ENCODE measurements at regions of chr20 and their contacts with region 1.

Region 1: DNA sequence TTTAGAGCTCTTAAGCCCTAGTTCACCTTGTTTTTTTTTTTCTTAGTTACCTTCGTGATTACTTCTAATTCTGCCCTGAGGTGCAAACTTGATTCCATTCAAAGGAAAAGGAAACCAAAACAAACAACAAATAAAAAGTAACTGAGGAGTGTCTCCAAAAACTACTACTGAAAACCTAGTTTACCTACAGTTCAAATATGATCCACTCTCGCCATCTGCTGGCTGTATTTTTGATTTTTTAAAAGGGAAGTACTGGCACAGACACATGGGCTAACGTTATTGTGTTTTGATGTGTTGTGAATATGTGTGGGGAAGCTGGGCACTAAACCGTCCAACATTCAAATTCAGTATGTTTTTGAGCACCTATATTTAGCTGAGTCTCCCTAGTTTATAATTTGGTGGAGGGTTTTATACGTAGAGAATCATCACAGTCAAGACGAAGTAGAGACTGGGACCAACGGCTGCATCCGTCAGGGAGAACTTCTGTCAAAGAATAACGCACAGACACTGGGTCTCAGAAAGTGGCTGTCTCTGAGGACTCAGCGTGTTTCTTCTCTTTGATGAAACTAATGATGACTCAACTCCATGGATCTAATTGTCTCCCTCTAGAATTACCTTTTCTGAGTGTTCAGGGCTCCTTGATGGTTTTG is 373.5 kb upstream of the BTBD3 start:
- DNase-seq: no peak
- H3K4me3 ChIP-seq: no peak overlapping the region
- H3K27ac ChIP-seq: no peak overlapping the region
- H3K4me1 ChIP-seq: no peaks in the 10 kb centered on the region
- H3K27me3 ChIP-seq: no peaks in the 10 kb centered on the region
- CTCF ChIP-seq: peak; percentile 72

Region 2: DNA sequence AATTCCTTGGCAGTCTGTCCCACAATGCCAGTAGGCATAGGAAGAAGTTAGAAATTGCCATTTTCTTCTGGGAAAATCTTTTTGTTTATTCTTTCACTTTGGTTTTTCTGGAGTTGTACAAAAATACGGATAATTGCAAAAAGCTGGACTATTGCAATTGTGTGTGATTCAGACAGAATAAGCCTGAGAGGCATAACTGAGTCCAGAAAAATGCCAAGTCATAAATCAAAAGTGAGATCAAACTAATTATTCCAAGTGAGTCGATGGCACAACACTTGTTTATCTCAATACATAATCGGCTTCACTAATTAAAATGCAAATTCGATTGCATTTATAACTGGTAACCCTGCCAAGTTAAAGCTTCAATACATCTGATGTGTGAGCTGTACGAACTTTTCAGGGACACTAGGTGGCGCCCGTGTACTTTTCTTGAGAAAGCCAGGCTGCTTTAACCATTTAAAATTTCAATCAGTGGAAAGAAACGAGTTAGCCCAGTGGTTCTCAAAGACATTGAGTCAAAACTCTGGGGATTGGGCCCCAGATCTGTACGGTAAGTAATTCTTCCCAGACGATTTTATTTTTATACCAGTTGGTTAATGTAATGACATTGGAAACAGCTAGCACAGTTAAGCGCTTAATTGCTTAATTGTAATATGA is 1927.2 kb before region 1 on chr20:
- intact Hi-C with region 1: loop called (anchors 10 kb)
- DNase-seq: peak; percentile 36
- H3K4me3 ChIP-seq: no peak overlapping the region
- H3K27ac ChIP-seq: no peak overlapping the region
- H3K4me1 ChIP-seq: no peaks in the 10 kb centered on the region
- H3K27me3 ChIP-seq: peaks cover 57% of the 10 kb centered on the region
- CTCF ChIP-seq: peak; percentile 85

Region 3: GRCh38 chr20:9978397-9979004 is 1565.7 kb before region 1 on chr20:
- intact Hi-C with region 1: loop called (anchors 10 kb)
- DNase-seq: no peak
- H3K4me3 ChIP-seq: no peak overlapping the region
- H3K27ac ChIP-seq: no peak overlapping the region
- H3K4me1 ChIP-seq: no peaks in the 10 kb centered on the region
- H3K27me3 ChIP-seq: peaks cover 12% of the 10 kb centered on the region
- CTCF ChIP-seq: peak; percentile 79

Region 4: DNA sequence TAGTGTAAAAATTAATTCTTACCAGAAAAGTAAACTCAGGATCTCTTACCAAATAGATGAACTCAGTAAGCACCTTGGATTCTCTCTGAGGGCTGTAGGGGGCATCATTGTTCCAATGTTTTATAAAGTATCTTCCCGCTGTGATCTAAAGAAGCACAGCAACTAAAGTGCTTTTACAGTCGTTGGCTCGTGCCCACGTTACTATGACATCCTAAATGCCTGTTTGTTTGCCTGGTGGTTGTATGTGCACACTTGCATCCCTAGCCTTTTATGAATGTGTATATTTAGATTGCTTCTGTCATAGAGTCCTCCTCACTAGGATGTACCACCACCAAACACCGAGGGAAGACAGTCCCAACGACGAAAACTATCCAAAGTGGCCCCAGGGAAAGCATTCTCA is 1074.6 kb before region 1 on chr20:
- intact Hi-C with region 1: loop called (anchors 10 kb)
- DNase-seq: no peak
- H3K4me3 ChIP-seq: no peak overlapping the region
- H3K27ac ChIP-seq: no peak overlapping the region
- H3K4me1 ChIP-seq: peaks cover 47% of the 10 kb centered on the region
- H3K27me3 ChIP-seq: no peaks in the 10 kb centered on the region
- CTCF ChIP-seq: peak; percentile 75

Region 5: GRCh38 chr20:11067359-11067758 is 476.8 kb before region 1 on chr20:
- intact Hi-C with region 1: no loop called
- DNase-seq: no peak
- H3K4me3 ChIP-seq: no peak overlapping the region
- H3K27ac ChIP-seq: peak overlapping the region; percentile 65
- H3K4me1 ChIP-seq: peaks cover 42% of the 10 kb centered on the region
- H3K27me3 ChIP-seq: no peaks in the 10 kb centered on the region
- CTCF ChIP-seq: no peak

Measured in left ventricle myocardium inferior (tissue), 1 donor.